Calu3 (cell line): ENCODE measurements at regions of chr4 and their contacts with region 1.

Region 1: GRCh38 chr4:37603070-37603468 is 83.1 kb downstream of the RELL1 start:
- DNase-seq: peak; percentile 82
- H3K4me3 Mint-ChIP-seq: no peak overlapping the region
- H3K27ac Mint-ChIP-seq: peak overlapping the region; percentile 40
- H3K4me1 Mint-ChIP-seq: peaks cover 54% of the 10 kb centered on the region
- H3K27me3 Mint-ChIP-seq: no peaks in the 10 kb centered on the region
- CTCF ChIP-seq: peak; percentile 91

Region 2: GRCh38 chr4:37686373-37687193 is 83.5 kb after region 1 on chr4 and contains the start of gene RELL1:
- CTCF ChIA-PET with region 1: no interaction called
- intact Hi-C with region 1: loop called (anchors 5 kb)
- DNase-seq: peak; percentile 98
- H3K4me3 Mint-ChIP-seq: peak within 1 kb of the TSS; percentile 72
- H3K27ac Mint-ChIP-seq: peak within 1 kb of the TSS; percentile 61
- H3K4me1 Mint-ChIP-seq: peaks cover 13% of the 10 kb centered on the region
- H3K27me3 Mint-ChIP-seq: no peaks in the 10 kb centered on the region
- CTCF ChIP-seq: no peak
- total RNA-seq, gene RELL1: 15.4 and 18.2 TPM in 2 replicates